ENCODE measurements at regions of chr13 and their contacts with region 1.

Region 1: DNA sequence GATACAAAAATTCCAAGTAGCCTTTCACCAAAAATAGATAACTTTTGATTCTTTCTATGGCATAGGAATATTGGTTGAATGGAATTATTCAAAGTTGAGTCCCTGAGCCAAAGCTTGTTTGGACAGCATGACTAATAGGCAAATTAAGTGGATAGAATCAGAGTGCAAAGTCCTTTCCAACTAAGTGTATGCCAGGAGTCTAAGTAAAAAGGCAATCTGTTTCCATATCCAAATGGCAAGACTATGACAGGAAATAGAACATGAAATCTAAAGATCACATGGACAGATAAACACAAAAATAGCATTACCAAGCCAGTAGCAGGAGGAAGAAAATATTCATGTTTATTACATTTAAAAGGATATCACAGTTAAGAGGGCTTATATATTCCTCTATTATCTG is 804.6 kb downstream of the SLITRK6 start:
- DNase-seq: no peak

Region 2: DNA sequence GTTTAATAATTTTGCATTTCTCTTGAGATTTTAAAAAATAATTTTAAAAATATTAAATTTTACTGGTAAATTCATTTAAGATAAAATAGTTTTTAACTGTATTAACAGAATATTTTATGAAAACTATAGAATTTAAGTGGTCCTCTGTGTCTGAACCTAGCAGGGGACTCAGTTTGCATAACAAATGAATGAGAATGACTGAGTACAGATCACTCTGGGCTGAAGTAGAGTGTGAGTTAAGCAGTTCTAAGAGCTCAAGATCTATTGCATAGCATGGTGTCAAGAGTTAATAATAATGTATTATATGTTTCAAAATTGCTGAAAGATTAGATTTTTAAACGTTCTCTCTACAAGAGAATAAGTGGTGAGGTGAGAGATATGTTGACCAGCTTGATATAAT is 764.0 kb before region 1 on chr13:
- intact Hi-C with region 1: no loop called
- DNase-seq: no peak

Region 3: DNA sequence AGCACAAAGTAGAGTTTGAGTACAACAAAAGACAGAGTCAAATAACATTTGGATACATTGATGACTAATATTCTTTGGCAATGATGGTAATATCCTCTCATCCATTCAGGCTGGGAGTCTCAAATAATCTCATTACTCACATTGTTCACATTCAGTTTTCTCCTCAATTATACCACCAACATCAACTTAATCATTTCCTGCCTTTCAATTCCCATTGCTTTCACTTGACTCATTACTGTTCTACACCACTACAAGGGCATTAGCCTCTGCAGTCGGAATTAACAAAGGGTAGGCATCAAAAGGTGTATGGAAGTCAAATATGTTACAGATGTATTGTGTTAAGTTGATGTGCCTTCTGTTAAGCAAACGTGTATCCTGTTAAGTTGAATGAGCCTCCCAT is 593.9 kb before region 1 on chr13:
- intact Hi-C with region 1: no loop called
- DNase-seq: no peak

Region 4: GRCh38 chr13:85223883-85224656 is 229.5 kb after region 1 on chr13:
- intact Hi-C with region 1: no loop called
- DNase-seq: no peak

Region 5: GRCh38 chr13:85286081-85286480 is 291.5 kb after region 1 on chr13:
- intact Hi-C with region 1: loop called in 1 of 2 experiments (anchors 10 kb)
- DNase-seq: no peak

Measured in posterior vena cava (tissue), 2 donors.